MCF 10A (cell line): ENCODE measurements at regions of chr4 and their contacts with region 1.

Region 1: DNA sequence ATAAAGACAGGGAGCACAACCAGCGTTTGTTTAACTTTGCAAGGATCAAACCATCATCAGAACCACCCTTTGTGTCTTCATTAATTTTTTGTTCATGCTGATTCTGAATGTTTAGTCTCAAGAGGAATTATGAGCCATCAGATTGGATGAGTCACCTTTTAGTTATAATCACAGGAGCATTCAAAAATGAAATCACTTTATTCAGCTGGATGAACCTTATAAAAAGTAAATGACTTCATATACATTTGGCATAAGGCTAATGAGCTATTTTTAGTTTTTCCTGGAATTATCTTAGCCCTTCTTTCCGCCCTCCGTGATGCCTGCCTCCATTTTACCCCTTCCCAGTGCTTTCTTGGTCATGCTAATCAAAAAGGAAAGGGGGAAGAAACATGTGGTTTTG is 103.6 kb downstream of the SORBS2 start:
- DNase-seq: peak; percentile 44
- H3K4me3 Mint-ChIP-seq: no peak overlapping the region
- H3K27ac Mint-ChIP-seq: peak overlapping the region; percentile 88
- H3K4me1 Mint-ChIP-seq: peaks cover 50% of the 10 kb centered on the region
- H3K27me3 Mint-ChIP-seq: no peaks in the 10 kb centered on the region
- CTCF ChIP-seq: no peak

Region 2: DNA sequence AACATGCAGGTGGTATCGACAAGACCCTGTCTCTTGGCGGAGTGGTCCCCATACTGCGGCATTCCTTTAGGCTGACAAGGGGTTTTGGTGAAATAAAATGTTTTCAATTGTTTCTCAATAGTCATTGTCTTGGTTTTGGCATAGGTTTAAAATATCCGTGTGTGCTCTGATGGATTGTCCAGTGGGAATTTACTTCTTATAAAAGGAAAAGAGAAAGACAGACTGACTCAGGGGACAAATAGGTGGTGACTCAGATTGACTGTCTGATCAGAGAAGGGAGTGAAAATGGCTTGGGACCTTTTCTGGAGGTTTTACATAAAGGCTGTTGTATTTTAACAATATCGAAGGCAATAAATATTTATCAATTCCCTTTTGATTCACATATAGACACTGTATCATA is 26.1 kb before region 1 on chr4:
- CTCF ChIA-PET with region 1: no interaction called
- POLR2A ChIA-PET with region 1: no interaction called
- intact Hi-C with region 1: no loop called
- DNase-seq: peak; percentile 50
- H3K4me3 Mint-ChIP-seq: no peak overlapping the region
- H3K27ac Mint-ChIP-seq: peak overlapping the region; percentile 27
- H3K4me1 Mint-ChIP-seq: peaks cover 7% of the 10 kb centered on the region
- H3K27me3 Mint-ChIP-seq: no peaks in the 10 kb centered on the region
- CTCF ChIP-seq: no peak

Region 3: GRCh38 chr4:185721190-185721932 is 13.0 kb after region 1 on chr4:
- CTCF ChIA-PET with region 1: interaction called, 4 read pairs
- POLR2A ChIA-PET with region 1: interaction called, 43 read pairs
- intact Hi-C with region 1: no loop called
- DNase-seq: peak; percentile 58
- H3K4me3 Mint-ChIP-seq: peak overlapping the region; percentile 46
- H3K27ac Mint-ChIP-seq: peak overlapping the region; percentile 87
- H3K4me1 Mint-ChIP-seq: peaks cover 32% of the 10 kb centered on the region
- H3K27me3 Mint-ChIP-seq: no peaks in the 10 kb centered on the region
- CTCF ChIP-seq: no peak

Region 4: DNA sequence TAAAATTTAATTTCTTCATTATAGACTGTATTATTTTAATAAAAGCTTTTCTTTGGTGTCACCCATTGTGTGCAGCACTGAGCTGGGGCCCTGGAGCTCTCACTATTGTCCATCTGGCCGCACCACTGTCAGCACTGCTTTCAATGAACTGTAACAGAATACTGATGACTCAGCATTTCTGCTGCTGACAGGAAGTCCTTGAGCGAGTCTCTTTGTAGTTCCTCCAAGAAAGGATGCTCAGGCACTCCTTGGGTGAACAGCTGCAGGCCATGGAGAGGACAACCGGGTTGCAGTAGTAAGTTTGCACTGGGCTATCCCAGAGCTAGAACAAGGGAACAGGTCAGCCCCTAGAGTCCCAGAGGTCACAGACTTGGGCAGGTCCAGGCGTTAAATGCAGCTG is 22.0 kb after region 1 on chr4:
- CTCF ChIA-PET with region 1: interaction called, 6 read pairs
- POLR2A ChIA-PET with region 1: interaction called, 24 read pairs
- intact Hi-C with region 1: loop called (anchors 1 kb)
- DNase-seq: peak; percentile 76
- H3K4me3 Mint-ChIP-seq: peak overlapping the region; percentile 35
- H3K27ac Mint-ChIP-seq: peak overlapping the region; percentile 85
- H3K4me1 Mint-ChIP-seq: peaks cover 30% of the 10 kb centered on the region
- H3K27me3 Mint-ChIP-seq: no peaks in the 10 kb centered on the region
- CTCF ChIP-seq: no peak

Region 5: GRCh38 chr4:186021461-186022167 is 313.3 kb after region 1 on chr4:
- CTCF ChIA-PET with region 1: interaction called, 3 read pairs
- POLR2A ChIA-PET with region 1: no interaction called
- intact Hi-C with region 1: loop called (anchors 1 kb)
- DNase-seq: peak; percentile 31
- H3K4me3 Mint-ChIP-seq: no peak overlapping the region
- H3K27ac Mint-ChIP-seq: no peak overlapping the region
- H3K4me1 Mint-ChIP-seq: no peaks in the 10 kb centered on the region
- H3K27me3 Mint-ChIP-seq: no peaks in the 10 kb centered on the region
- CTCF ChIP-seq: peak; percentile 55

Region 6: DNA sequence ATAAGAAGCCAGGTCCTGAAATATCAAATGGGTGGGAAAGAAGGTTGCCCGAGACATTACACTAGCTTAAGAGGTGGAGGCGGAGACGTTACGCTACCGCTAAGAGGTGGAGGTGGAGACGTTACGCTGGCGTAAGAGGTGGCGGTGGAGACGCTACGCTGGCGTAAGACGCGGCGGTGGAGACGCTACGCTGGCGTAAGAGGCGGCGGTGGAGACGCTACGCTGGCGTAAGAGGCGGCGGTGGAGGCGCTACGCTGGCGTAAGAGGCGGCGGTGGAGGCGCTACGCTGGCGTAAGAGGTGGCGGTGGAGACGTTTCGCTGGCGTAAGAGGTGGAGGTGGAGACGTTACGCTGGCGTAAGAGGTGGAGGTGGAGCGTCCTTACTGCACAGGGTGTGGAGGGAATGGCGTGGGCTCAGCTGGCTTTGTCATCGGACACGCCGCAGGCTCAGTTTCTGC is 495.8 kb after region 1 on chr4:
- CTCF ChIA-PET with region 1: no interaction called
- POLR2A ChIA-PET with region 1: no interaction called
- intact Hi-C with region 1: no loop called
- DNase-seq: no peak
- H3K4me3 Mint-ChIP-seq: no peak overlapping the region
- H3K27ac Mint-ChIP-seq: no peak overlapping the region
- H3K4me1 Mint-ChIP-seq: no peaks in the 10 kb centered on the region
- H3K27me3 Mint-ChIP-seq: no peaks in the 10 kb centered on the region
- CTCF ChIP-seq: no peak